ENCODE measurements at regions of chr4 and their contacts with region 1.

Region 1: DNA sequence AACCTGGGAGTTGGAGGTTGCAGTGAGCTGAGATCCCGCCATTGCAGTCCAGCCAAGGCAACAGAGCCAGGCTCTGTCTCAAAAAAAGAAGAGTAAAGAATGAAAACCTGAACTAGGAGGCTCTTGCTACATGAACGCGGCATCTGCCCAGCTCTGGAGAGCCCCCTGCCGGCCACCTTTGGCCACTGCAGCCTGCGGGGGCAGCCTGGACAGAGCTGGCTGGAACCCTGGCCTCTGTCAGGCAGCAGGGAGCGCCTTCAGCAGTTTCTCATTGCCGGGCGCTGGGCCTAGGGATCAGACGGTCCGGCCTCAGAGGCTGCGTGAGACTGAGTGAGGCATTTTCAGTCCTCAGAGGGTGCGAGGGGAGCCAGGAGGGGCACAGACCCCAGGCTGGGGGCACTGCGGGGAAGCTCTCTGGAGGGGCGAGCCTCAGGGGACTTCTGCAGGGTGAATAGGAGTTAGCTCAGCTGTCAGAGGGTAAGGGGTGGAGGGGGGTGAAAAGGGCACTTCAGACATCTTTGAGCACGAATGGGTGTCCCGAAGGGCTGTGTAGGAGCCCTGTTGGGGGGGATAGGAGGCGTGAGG is 17.5 kb downstream of the DOK7 start:
- DNase-seq: peak; percentile 83
- H3K4me3 Mint-ChIP-seq: no peak overlapping the region
- H3K27ac Mint-ChIP-seq: no peak overlapping the region
- H3K4me1 Mint-ChIP-seq: no peaks in the 10 kb centered on the region
- H3K27me3 Mint-ChIP-seq: peaks cover 20% of the 10 kb centered on the region

Region 2: GRCh38 chr4:3305598-3306371 is 174.8 kb before region 1 on chr4:
- CTCF ChIA-PET with region 1: no interaction called
- intact Hi-C with region 1: no loop called
- DNase-seq: peak; percentile 73
- H3K4me3 Mint-ChIP-seq: peak overlapping the region; percentile 46
- H3K27ac Mint-ChIP-seq: peak overlapping the region; percentile 85
- H3K4me1 Mint-ChIP-seq: peaks cover 51% of the 10 kb centered on the region
- H3K27me3 Mint-ChIP-seq: no peaks in the 10 kb centered on the region

Region 3: DNA sequence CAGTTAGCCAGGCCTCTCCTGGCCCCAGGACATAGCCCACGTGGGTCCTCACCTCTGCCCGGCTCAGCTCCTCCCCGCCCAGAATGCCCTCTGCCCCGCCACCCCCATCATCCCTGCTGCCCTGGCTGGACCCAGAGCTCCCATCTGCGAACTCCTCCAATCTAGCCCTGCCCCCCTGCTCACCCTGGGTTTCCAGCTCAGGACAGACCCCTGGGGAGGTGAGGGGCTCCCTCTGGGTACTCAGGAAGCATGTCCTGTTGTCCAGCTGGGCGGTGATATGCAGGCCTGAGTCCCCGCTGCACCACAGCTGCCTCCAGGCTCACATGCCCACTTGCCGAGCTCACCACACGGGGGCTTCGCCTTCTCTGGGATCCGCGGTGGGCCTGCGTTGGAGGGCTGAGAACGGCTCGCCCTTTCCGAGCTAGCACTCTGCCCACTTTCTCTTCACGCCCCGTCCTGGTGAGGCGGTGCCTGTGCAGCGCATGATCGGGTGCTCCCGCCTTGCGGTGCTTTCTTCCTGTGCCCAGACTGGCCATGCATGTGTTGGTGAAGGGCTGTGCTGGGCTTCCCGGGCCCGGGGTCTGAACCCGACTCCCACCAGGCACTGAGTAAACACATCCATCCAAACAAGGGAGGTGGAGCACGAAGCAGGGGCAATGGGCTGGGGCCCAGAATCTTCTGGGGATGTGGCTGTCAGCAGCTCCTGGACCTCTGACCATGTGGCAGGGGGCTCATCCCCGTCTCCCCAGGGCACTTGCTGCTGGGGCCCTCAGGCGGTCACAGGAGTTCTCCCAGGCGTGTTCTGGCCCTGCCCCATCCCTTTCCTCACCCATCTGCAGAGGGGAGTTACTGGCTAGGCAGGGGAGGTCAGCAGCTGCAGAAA is 113.5 kb before region 1 on chr4:
- CTCF ChIA-PET with region 1: no interaction called
- intact Hi-C with region 1: no loop called
- DNase-seq: no peak
- H3K4me3 Mint-ChIP-seq: no peak overlapping the region
- H3K27ac Mint-ChIP-seq: no peak overlapping the region
- H3K4me1 Mint-ChIP-seq: peaks cover 38% of the 10 kb centered on the region
- H3K27me3 Mint-ChIP-seq: peaks cover 10% of the 10 kb centered on the region

Region 4: DNA sequence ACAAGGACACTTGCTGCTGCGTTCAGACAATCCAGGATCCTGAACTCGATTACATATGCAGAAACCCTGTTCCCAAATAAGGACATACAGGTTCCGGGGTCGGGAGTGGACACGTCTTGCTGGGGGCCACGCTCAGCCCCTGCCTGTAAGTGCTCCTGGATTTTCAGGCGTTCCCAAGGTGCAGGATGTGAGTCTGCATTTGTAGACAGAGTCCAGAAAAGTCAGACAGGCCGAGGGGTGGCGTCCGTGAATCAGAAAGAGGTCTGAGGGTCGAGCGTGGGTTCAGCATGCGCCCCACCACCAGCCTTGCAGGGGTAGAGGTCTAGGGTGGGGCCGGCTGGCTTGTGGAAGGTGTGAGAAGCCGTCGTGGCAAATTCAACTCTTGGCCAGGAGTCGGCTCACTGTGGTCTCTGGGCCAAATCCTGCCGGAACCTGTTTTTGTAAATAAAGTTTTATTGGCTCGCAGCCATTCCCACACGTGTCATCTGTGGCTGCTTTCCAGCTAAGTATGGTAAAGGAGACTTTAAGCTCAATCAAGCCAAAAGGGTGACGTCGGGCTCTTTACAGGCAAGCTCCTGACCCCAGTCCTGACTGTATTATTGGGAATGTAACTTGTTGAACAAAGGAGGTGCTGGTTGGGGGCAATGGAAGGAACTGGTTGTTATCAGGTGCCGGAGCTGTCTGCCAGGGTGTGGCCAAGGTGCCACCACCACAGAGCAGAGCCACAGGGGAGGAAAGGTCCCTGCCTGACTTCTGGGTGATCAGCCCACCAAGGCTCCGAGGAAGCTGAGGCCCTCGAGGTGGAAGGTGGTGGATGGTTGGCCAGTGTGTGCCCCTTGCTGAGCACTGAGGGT is 10.1 kb before region 1 on chr4:
- CTCF ChIA-PET with region 1: interaction called, 14 read pairs
- intact Hi-C with region 1: no loop called
- DNase-seq: no peak
- H3K4me3 Mint-ChIP-seq: no peak overlapping the region
- H3K27ac Mint-ChIP-seq: no peak overlapping the region
- H3K4me1 Mint-ChIP-seq: no peaks in the 10 kb centered on the region
- H3K27me3 Mint-ChIP-seq: no peaks in the 10 kb centered on the region

Region 5: DNA sequence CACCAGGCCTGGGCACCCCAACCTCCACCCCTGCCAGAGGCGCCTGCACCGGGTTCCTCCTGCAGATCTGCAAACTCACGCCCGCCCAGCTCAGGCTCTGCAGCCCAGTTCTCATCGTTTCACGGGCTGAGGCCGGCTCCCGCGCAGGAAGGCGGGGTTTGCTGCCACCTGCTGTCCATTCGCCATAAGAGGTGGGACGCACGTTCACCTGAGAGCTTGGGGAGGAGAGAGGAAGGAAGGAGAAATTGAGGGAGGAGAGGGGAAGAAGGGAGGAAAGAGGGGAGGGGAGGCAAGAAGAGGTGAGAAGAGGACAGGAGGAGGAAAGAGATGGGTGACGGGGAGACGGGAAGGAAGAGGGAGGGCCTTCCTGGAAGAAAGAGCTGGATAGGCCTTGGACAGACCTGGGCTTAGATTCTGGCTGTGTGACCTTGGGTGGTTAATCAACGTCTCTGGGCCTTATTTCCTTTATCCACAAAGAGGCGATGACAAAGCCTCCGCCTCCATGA is 400.0 kb after region 1 on chr4:
- CTCF ChIA-PET with region 1: interaction called, 4 read pairs
- intact Hi-C with region 1: loop called (anchors 10 kb)
- DNase-seq: peak; percentile 85
- H3K4me3 Mint-ChIP-seq: no peak overlapping the region
- H3K27ac Mint-ChIP-seq: no peak overlapping the region
- H3K4me1 Mint-ChIP-seq: peaks cover 12% of the 10 kb centered on the region
- H3K27me3 Mint-ChIP-seq: peaks cover 44% of the 10 kb centered on the region